Activated T-helper 1 cell treated with anti-CD3 and anti-CD28 coated beads, Interleukin-12 subunit alpha, Interleukin-12 subunit beta, Interleukin-2, Interleukin-4 antibody, amounts not matched to agents 30 ng/mL and 10 ng/mL and 1 ng/mL, durations not matched to agents 14 hours and 24 hours and 36 hours (primary cell): ENCODE measurements at regions of chr2 and their contacts with region 1.

Region 1: DNA sequence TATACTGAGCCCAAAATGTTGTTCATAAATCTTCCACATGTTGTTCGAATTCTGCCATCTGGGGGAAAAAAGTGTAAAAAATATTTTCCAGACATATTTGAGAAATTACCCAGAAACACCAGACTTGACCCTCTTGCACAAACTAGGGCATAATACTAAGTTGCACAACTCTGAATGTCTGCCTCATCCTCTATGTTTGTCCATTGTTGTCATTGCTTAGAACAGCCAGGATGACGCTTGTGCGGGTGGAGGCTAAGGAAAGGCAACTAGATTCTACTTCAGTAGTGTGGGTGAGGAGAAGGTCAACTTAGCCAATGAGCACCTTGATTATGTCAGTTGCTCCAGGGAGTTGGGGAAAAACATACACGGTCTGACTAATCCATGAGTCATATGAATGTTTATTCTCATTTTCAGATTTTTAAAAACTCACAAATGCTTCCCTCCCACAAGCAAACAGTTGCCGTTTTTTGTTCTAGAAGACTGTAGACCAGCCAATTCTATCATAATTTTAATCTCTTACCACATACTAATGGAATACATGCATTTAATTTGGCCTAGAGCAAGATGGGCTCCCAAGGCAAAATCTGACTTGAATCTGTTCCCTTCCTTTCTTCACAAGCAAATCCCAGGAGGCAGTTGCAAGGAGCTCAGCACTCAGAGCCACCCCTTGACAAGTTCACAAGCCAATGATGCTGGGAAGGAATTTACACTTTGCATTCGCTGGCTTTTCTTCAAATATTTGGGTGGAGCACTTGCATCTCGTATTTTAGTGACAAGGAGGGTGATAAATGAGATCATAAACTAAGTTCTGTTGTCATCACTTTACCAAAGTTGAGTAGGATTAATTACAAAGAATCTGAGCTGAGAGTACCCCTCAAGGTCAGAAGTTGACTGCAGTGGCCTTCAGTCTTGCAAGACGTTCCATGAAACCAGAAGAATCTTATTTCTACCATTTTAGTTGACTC is 163.2 kb upstream of the TWIST2 start:
- DNase-seq: no peak
- H3K4me3 Mint-ChIP-seq: no peak overlapping the region
- H3K27ac Mint-ChIP-seq: peak overlapping the region; percentile 72
- H3K4me1 Mint-ChIP-seq: peaks cover 20% of the 10 kb centered on the region
- H3K27me3 Mint-ChIP-seq: peaks cover 10% of the 10 kb centered on the region

Region 2: DNA sequence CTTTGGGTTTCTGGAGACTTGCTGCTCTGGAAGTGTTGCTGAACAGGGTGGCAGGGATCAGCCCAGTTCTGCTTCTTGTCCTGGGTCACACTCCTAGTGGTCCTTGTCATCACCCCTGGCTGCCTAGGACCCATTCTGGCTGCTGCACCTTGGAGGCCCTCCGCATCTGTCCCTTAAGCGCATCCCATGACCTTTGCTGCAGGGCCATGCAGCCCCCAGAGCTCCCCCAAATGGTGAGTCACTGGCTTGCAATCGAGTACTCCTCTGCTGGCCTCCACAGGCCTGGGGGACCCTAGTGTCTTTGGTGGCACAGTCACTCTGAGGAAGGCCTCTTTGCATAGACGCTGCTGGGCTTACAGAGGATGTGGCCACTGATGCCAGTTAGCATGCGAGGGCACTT is 69.5 kb before region 1 on chr2:
- intact Hi-C with region 1: no loop called
- DNase-seq: no peak
- H3K4me3 Mint-ChIP-seq: no peak overlapping the region
- H3K27ac Mint-ChIP-seq: no peak overlapping the region
- H3K4me1 Mint-ChIP-seq: no peaks in the 10 kb centered on the region
- H3K27me3 Mint-ChIP-seq: peaks cover 3% of the 10 kb centered on the region

Region 3: DNA sequence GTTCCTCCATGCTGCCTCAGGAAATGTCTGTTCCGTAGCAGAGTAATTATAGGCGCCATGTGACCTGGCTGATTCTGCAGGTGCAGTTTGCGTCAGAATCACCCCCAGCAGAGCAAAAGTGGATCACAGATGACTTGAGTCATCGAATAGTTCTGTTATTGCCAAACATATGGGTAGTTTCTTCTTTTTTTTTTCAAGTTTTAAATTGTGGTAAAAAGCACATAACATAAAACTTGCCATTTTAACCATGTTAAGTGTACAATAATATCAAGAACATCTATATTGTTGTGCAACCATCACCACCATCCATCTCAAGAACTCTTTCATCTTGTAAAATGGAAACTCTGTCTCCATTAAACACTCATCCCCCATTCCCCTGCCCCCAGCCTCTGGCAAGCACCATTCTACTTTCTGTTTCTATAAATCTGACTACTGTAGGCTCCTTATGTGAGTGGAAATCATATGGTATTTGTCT is 14.5 kb before region 1 on chr2:
- intact Hi-C with region 1: loop called (anchors 1 kb)
- DNase-seq: no peak
- H3K4me3 Mint-ChIP-seq: no peak overlapping the region
- H3K27ac Mint-ChIP-seq: no peak overlapping the region
- H3K4me1 Mint-ChIP-seq: peaks cover 14% of the 10 kb centered on the region
- H3K27me3 Mint-ChIP-seq: peaks cover 4% of the 10 kb centered on the region

Region 4: DNA sequence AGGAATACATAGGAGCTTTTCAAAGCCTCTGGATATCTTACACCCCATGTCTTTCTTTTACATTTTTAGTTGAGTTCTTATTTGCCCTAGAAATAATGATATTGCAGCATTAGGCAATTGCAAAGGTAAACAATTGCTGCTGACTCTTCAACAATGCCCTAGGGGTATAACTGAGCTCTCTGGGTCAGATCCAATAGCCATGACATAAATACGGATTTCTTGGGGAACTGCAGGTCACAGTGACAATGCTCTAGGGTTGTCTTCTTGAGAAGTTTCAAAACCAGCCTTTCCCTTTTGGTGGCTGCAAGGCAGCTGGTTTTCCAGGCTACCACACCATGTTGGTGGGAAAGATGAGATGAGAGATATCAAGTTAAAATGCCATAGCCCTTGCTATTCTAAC is 1385.2 kb after region 1 on chr2:
- intact Hi-C with region 1: no loop called
- DNase-seq: no peak
- H3K4me3 Mint-ChIP-seq: no peak overlapping the region
- H3K27ac Mint-ChIP-seq: no peak overlapping the region
- H3K4me1 Mint-ChIP-seq: no peaks in the 10 kb centered on the region
- H3K27me3 Mint-ChIP-seq: peaks cover 21% of the 10 kb centered on the region